ENCODE measurements at regions of chr22 and their contacts with region 1.

Region 1: DNA sequence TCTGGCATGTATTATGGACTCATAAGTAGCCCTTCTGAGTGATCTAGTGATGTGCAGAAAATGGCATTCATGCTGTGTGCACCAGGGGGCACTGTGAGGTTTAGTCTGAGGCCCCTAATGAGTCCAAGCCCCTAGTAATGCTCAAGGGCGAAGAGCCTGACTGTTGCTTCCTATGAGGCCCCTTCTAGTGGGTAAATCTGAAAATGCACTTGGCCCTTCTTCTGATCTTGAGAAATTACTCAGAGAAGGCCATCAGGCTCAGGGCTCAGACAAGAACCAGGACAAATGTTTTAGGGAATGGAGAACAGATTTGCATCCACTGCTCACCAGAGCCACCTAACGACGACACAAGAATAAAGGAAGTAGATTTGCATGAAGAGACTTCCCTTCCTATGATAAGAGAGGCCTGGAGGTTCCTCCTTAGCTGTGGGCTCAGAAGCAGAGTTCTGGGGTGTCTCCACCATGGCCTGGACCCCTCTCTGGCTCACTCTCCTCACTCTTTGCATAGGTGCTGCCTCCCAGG is 75.8 kb downstream of the GGTLC2 start:
- DNase-seq: peak in 28 of 35 experiments; percentile 13 to 74 (median 36)
- ATAC-seq: peak; percentile 70 to 79 (median 75)
- H3K4me3 ChIP-seq: no peak overlapping the region
- H3K4me3 Mint-ChIP-seq: no peak overlapping the region
- H3K27ac ChIP-seq: peak overlapping the region; percentile 64
- H3K27ac Mint-ChIP-seq: peak overlapping the region; percentile 67 to 73
- H3K4me1 ChIP-seq: peaks cover 8 to 30% of the 10 kb centered on the region in 2 experiments
- H3K4me1 Mint-ChIP-seq: peaks cover 23 to 37% (median 28%) of the 10 kb centered on the region in 3 donors
- H3K27me3 ChIP-seq: no peaks in the 10 kb centered on the region
- H3K27me3 Mint-ChIP-seq: peaks cover 2 to 3% of the 10 kb centered on the region in 2 donors

Region 2: DNA sequence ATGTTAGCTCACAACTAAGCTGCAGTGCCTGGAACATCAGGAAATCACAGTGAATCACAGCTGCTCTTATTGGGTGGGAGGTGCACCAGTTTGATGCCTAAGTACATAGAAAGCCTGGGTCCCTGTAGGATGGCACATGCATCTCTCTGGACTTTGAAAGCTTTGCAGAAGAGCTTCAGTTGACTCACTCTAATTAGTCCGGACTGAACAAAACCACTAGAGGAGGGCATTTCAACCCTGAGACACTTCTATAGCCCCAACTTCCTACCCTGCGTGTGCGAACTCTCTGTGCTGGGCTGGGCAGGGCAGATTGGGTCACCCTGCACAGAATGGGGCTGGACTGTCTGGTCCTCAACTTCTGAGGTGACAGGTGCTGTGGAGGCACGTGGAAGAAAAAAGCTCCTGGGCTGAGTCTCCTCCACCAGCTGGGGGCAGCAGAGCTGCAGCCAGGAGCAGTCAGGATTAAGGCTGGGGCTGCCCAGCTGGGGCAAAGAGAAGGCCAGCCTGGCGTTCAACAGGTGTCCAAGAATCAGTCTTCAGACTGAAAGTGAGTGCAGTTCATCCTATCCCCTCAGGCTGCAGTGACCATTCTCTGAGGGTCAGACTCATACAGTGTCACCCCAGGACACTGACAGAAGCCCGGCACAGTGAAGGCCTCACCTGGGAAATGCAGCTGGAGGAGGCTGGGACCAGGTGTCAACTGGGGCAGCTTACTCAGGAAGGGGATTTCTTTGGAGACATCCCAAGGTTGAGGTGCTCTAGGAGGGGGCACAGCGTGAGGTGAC is 53.8 kb before region 1 on chr22:
- CTCF ChIA-PET with region 1: no interaction called
- POLR2A ChIA-PET with region 1: no interaction called
- DNase-seq: peak in 8 of 35 experiments; percentile 2 to 16 (median 6)
- ATAC-seq: peak in 1 of 4 experiments; percentile 29
- H3K4me3 ChIP-seq: no peak overlapping the region
- H3K4me3 Mint-ChIP-seq: no peak overlapping the region
- H3K27ac ChIP-seq: no peak overlapping the region
- H3K27ac Mint-ChIP-seq: no peak overlapping the region
- H3K4me1 ChIP-seq: no peaks in the 10 kb centered on the region
- H3K4me1 Mint-ChIP-seq: no peaks in the 10 kb centered on the region
- H3K27me3 ChIP-seq: peaks cover 0 to 17% of the 10 kb centered on the region in 2 experiments
- H3K27me3 Mint-ChIP-seq: peaks cover 0 to 2% of the 10 kb centered on the region in 2 donors

Region 3: GRCh38 chr22:22692707-22693530 is 27.3 kb before region 1 on chr22:
- CTCF ChIA-PET with region 1: no interaction called
- POLR2A ChIA-PET with region 1: no interaction called
- DNase-seq: peak; percentile 14 to 75 (median 59)
- ATAC-seq: peak; percentile 68 to 77 (median 76)
- H3K4me3 ChIP-seq: no peak overlapping the region
- H3K4me3 Mint-ChIP-seq: no peak overlapping the region
- H3K27ac ChIP-seq: no peak overlapping the region
- H3K27ac Mint-ChIP-seq: no peak overlapping the region
- H3K4me1 ChIP-seq: no peaks in the 10 kb centered on the region
- H3K4me1 Mint-ChIP-seq: peaks cover 0 to 2% (median 0%) of the 10 kb centered on the region in 3 donors
- H3K27me3 ChIP-seq: peaks cover 0 to 16% of the 10 kb centered on the region in 2 experiments
- H3K27me3 Mint-ChIP-seq: peaks cover 0 to 1% of the 10 kb centered on the region in 2 donors

Region 4: DNA sequence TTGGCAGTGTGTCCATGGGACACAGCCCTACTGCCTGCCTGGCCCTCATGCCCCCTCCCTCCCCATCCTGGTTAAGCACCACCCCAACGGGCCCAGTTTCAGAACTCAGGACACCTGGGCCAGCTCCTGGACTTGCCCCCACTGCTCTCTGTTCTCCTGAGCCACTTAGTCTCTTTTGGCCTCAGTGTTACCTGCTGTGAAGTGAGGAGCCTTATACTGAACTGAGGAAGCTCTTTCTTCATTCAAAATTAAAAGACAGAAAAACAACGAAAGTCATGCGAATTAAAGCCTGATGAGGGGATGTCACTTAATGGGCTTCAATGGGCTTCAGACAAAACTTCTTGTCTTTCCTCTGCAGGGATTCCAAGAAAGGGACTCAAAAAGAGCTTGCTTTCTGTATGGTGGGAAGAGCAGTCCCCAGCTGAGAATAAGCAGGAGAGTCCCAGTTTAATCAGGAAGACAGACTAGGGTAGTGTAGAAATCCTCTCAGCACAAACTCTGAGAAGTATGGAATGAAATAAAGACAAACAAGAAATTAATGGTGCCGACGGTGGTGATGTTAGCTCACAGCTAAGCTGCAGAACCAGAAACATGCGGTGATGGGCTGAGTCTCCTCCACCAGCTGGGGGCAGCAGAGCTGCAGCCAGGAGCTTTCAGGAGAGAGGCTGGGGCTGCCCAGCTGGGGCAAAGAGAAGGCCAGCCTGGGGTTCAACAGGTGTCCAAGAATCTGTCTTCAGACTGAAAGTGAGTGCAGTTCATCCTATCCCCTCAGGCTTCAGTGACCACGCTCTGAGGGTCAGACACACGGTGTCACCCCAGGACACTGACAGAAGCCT is 25.2 kb after region 1 on chr22:
- CTCF ChIA-PET with region 1: interaction called in 1 of 2 experiments, 21 read pairs
- POLR2A ChIA-PET with region 1: no interaction called
- DNase-seq: peak in 29 of 35 experiments; percentile 11 to 63 (median 37)
- ATAC-seq: peak in 3 of 4 experiments; percentile 57 to 71 (median 69)
- H3K4me3 ChIP-seq: no peak overlapping the region
- H3K4me3 Mint-ChIP-seq: no peak overlapping the region
- H3K27ac ChIP-seq: no peak overlapping the region
- H3K27ac Mint-ChIP-seq: peak overlapping the region; percentile 6 to 36
- H3K4me1 ChIP-seq: peaks cover 0 to 35% of the 10 kb centered on the region in 2 experiments
- H3K4me1 Mint-ChIP-seq: peaks cover 0 to 26% (median 9%) of the 10 kb centered on the region in 3 donors
- H3K27me3 ChIP-seq: peaks cover 0 to 8% of the 10 kb centered on the region in 2 experiments
- H3K27me3 Mint-ChIP-seq: peaks cover 10 to 22% of the 10 kb centered on the region in 2 donors